ENCODE measurements at regions of chr4 and their contacts with region 1.

Region 1: DNA sequence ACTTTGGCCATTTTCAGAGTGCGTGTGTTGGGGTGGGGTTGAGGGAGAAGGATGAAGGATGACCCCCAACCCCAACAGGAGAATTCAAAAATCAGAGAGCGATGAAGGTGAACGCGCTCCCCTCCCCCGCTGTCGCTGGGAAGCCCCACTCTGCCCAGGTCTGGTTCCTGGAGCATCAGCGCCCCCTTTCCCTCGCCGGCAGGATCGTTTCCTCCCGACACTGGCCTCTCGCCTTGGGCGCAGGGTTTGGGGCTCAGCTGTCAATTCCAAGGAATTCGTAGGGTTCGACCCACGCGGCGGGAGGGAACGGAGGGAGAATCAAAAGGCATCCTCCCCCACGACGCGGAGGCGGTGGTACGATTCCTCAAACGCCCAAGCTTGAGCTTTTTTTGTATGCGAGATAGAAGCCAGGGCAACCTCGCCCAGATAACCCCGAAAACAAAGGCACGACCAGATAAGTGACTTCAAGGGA is 1.0 kb upstream of the PDGFRA start:
- DNase-seq: peak; percentile 46 to 51
- ATAC-seq: peak; percentile 40 to 51
- H3K4me3 ChIP-seq: peak overlapping the region; percentile 42 to 54 (median 46)
- H3K27ac ChIP-seq: peak overlapping the region; percentile 26 to 61 (median 46)
- H3K4me1 ChIP-seq: peaks cover 23 to 42% of the 10 kb centered on the region in 2 donors
- H3K27me3 ChIP-seq: peaks cover 84 to 88% (median 87%) of the 10 kb centered on the region in 3 donors
- CTCF ChIP-seq: peak; percentile 28 to 66 (median 53)
- POLR2A ChIP-seq: no peak

Region 2: DNA sequence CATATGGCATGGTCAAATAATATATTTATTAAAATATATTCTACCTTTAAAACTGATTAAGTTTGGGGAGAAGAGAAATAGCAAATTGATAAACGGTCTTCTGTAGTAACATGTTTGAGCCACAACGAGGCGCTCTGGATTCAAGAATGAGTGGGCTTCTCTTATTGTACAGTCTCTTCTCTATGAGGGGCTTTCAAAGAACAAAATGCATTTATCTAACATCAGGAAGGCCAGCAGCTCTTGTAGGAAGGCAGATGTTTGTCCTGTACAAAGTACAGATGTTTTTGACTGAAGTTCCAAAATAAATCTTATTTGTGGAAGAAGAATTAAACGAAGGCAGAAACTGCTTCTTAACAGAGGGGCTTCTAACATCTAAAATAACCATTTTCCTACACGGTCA is 1212.4 kb before region 1 on chr4:
- in situ Hi-C with region 1: loop called (anchors 10 to 25 kb)
- intact Hi-C with region 1: loop called (anchors 5 kb)
- DNase-seq: no peak
- ATAC-seq: no peak
- H3K4me3 ChIP-seq: no peak overlapping the region
- H3K27ac ChIP-seq: peak overlapping the region in 2 of 4 donors; percentile 6 to 28
- H3K4me1 ChIP-seq: peaks cover 18 to 45% of the 10 kb centered on the region in 2 donors
- H3K27me3 ChIP-seq: no peaks in the 10 kb centered on the region
- CTCF ChIP-seq: peak in 4 of 5 experiments; percentile 47 to 66 (median 59)
- POLR2A ChIP-seq: no peak

Region 3: DNA sequence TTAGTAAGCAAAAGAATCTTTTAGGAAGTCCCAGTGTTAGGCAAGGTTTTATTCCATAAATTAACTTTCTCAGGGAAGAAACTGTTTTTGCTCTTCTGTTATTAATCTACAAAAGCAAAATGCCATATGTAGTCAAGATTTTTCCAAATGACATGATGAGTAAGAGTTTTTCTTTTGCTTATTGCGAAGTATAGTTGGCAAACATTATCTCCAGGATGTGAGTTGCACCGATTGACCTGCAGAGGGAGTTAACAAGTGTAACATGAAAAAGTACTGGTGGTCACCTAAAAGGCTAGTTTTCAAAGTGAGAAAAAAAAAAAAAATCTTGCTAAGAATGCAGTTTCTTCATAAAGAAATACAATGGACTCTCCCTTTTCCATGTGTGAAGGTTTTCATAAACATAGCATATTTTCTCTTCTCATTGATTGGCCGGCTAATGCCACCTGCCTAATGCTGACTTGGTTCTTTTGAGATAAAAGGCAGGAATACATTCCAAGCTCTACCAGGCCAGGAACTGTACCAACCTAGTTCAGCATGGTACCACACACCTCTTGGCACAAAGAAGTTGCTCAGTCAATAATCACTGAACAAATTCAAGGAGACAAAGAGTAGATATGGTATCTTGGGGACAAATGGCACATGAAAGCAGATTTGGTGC is 737.0 kb before region 1 on chr4:
- in situ Hi-C with region 1: loop called in 3 of 4 experiments (anchors 10 to 25 kb)
- intact Hi-C with region 1: no loop called
- DNase-seq: peak in 1 of 2 donors; percentile 48
- ATAC-seq: peak; percentile 68 to 81
- H3K4me3 ChIP-seq: no peak overlapping the region
- H3K27ac ChIP-seq: peak overlapping the region in 1 of 4 donors; percentile 3
- H3K4me1 ChIP-seq: peaks cover 5 to 11% of the 10 kb centered on the region in 2 donors
- H3K27me3 ChIP-seq: no peaks in the 10 kb centered on the region
- CTCF ChIP-seq: peak; percentile 30 to 62 (median 50)
- POLR2A ChIP-seq: no peak

Region 4: DNA sequence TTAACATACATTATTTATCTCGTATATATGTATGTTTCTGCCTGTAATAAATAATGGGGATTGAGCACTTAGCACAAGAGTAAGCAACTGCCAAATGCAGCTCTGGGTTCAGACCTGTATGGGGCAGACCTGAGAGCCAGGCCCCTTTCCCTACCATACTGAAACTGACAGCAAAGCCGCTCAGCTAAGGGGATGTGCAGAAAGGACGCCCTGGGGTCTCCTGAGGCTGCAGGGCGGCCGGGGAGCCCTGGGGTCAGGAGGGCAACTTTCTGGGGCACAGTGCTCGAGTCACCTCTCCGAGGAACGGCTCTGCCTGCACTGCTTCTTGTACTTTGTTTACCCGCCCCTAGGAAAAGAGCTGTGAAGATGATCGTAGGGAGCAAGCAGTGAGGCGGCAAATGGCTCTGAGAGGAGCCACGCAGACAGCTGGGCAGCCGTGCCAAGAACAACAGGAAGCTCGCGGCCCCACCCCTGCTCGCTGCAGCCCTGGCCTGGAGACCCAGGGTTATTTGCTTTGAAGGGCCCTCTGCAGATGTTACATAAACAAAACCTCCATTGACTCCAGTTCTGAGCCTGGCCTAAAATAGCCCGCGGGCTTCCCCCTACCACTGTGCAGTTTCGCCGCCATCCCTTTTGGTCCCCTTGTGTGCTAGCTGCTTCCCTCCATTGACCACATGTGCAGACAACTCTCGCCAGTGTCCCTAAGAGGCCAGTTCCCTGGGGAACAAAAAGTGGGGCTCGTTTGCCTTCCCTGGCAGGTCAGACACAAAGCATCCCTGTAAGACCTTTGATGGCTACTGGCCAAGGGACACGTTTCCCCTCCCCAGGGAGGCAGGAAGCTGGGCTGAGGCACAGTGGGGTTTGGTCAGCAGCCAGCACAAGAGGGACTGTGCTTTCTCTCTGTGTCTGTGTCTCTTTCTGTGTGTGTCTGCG is 525.5 kb before region 1 on chr4:
- in situ Hi-C with region 1: loop called in 2 of 4 experiments (anchors 10 to 25 kb)
- intact Hi-C with region 1: loop called (anchors 10 kb)
- DNase-seq: peak; percentile 62 to 75
- ATAC-seq: peak; percentile 56 to 68
- H3K4me3 ChIP-seq: peak overlapping the region; percentile 22 to 50 (median 42)
- H3K27ac ChIP-seq: peak overlapping the region; percentile 45 to 71 (median 58)
- H3K4me1 ChIP-seq: peaks cover 12 to 21% of the 10 kb centered on the region in 2 donors
- H3K27me3 ChIP-seq: no peaks in the 10 kb centered on the region
- CTCF ChIP-seq: no peak
- POLR2A ChIP-seq: no peak

Region 5: GRCh38 chr4:53929955-53930798 is 297.9 kb before region 1 on chr4:
- in situ Hi-C with region 1: loop called in 2 of 4 experiments (anchors 5 to 10 kb)
- intact Hi-C with region 1: no loop called
- DNase-seq: peak; percentile 38 to 63
- ATAC-seq: peak; percentile 86 to 87
- H3K4me3 ChIP-seq: no peak overlapping the region
- H3K27ac ChIP-seq: no peak overlapping the region
- H3K4me1 ChIP-seq: no peaks in the 10 kb centered on the region
- H3K27me3 ChIP-seq: no peaks in the 10 kb centered on the region
- CTCF ChIP-seq: peak; percentile 65 to 79 (median 72)
- POLR2A ChIP-seq: no peak

Region 6: GRCh38 chr4:54187148-54187547 is 40.9 kb before region 1 on chr4:
- in situ Hi-C with region 1: no loop called
- intact Hi-C with region 1: no loop called
- DNase-seq: peak in 1 of 2 donors; percentile 13
- ATAC-seq: peak in 1 of 2 donors; percentile 33
- H3K4me3 ChIP-seq: no peak overlapping the region
- H3K27ac ChIP-seq: no peak overlapping the region
- H3K4me1 ChIP-seq: no peaks in the 10 kb centered on the region
- H3K27me3 ChIP-seq: no peaks in the 10 kb centered on the region
- CTCF ChIP-seq: no peak
- POLR2A ChIP-seq: no peak